ENCODE measurements at regions of chr1 and their contacts with region 1.

Region 1: DNA sequence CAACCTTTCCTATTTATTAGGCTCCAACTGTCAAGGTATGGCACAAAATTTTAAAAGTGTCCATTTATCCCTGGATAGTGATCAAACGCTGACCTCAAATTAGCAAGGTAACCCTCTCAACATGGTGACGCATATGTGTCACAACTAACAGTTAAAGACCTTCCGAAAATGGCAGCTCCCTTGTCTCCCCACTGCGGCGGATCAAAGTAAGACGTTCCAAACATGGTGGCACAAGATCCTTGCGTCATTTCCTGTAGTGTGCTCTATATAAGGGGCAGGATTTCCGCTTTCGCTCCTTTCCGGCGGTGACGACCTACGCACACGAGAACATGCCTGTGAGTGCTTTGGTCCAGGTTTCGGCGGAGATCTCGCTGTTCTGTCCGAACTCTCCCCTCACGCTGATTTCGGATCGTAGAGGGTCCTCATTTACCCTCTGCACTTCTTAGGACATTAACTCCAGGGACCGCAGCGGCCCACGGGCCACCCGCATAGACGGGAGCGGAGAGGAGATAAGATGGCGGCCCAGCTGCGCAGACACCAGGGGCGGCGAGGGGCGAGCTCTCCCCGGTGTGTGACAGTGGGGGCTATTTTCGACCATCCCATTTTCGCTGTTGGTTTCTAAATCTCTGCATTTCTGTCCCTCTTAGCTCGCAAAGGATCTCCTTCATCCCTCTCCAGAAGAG is at the start of gene RPS27:
- DNase-seq: peak; percentile 92 to 95
- ATAC-seq: peak; percentile 92 to 95
- H3K4me3 ChIP-seq: peak within 1 kb of the TSS; percentile 80 to 98 (median 90)
- H3K27ac ChIP-seq: peak within 1 kb of the TSS; percentile 92 to 97 (median 94)
- H3K4me1 ChIP-seq: peaks cover 24 to 26% of the 10 kb centered on the region in 2 donors
- H3K27me3 ChIP-seq: no peaks in the 10 kb centered on the region
- CTCF ChIP-seq: no peak
- POLR2A ChIP-seq: peak; percentile 99
- total RNA-seq, gene RPS27: 1,269 to 1,948 (median 1,828) TPM

Region 2: DNA sequence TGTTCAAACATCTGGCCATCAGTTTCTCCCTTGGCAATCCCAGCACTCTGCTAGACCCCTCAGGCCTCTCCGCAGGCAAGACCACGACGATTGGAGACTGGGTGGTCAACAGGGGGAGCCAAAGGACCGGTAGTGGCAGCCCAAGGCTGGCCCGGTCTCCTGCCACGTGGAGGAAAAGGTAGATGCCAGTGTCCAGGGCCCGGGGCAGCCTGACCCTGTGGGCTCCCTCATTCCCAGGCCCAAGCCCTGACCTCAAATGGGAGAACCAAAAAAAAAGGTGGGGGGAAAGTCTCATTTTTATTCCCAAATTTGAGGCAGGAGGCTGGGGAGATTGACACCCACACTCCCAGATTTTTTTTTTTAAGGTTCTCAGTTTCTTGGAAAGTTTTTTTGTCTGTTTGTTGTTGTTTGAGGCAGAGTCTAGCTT is 479.6 kb before region 1 on chr1:
- in situ Hi-C with region 1: loop called in 1 of 4 experiments (anchors 25 kb)
- intact Hi-C with region 1: no loop called
- DNase-seq: peak; percentile 59 to 79
- ATAC-seq: peak; percentile 55 to 63
- H3K4me3 ChIP-seq: no peak overlapping the region
- H3K27ac ChIP-seq: no peak overlapping the region
- H3K4me1 ChIP-seq: peaks cover 17 to 18% of the 10 kb centered on the region in 2 donors
- H3K27me3 ChIP-seq: no peaks in the 10 kb centered on the region
- CTCF ChIP-seq: peak; percentile 82 to 95 (median 91)
- POLR2A ChIP-seq: no peak

Region 3: GRCh38 chr1:153572569-153573015 is 418.0 kb before region 1 on chr1:
- in situ Hi-C with region 1: no loop called
- intact Hi-C with region 1: loop called (anchors 5 kb)
- DNase-seq: peak; percentile 80 to 88
- ATAC-seq: peak; percentile 83 to 86
- H3K4me3 ChIP-seq: no peak overlapping the region
- H3K27ac ChIP-seq: peak overlapping the region; percentile 59 to 77 (median 67)
- H3K4me1 ChIP-seq: peaks cover 14 to 27% of the 10 kb centered on the region in 2 donors
- H3K27me3 ChIP-seq: no peaks in the 10 kb centered on the region
- CTCF ChIP-seq: peak; percentile 78 to 90 (median 84)
- POLR2A ChIP-seq: no peak

Region 4: DNA sequence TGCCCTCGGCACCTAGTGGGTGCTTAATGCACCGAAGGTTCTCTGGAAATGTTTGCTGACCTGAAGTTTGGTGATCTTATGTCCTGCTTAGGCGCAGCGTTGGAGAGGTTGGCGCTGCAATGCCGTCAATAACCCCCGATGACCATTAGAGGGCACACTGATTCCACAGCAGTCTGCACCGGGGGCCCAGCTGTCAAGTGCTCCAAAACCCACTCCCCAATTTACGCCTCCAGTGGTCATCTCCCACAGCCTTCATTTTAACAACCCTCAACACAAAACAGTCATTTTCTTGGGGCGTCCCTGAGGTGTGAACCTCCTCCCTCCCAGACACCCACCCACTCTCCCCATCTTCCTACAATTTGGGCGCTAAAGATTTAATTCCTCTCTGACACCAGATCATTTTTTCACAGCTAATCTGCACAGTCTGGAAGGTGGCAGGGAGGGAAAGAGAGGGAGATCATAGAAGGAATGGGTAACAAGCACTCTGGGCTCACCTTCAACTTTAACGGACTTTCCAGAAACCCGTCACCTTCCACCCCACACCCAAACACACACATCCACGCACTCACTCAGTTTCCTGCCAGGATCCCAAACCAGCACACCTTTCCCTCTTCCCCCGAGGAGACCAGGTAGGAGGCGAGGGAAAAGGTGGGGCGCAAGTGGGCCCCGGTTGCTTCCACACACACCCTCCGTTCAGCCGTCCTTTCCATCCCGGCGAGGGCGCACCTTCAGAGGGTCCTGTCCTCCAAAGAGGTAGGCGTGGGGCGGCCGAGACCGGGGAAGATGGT is 312.7 kb before region 1 on chr1:
- in situ Hi-C with region 1: loop called in 3 of 4 experiments (anchors 25 kb)
- intact Hi-C with region 1: no loop called
- DNase-seq: peak in 1 of 2 donors; percentile 22
- ATAC-seq: peak; percentile 58 to 73
- H3K4me3 ChIP-seq: peak overlapping the region; percentile 45 to 70 (median 59)
- H3K27ac ChIP-seq: peak overlapping the region; percentile 16 to 57 (median 52)
- H3K4me1 ChIP-seq: peaks cover 9 to 16% of the 10 kb centered on the region in 2 donors
- H3K27me3 ChIP-seq: peaks cover 20 to 27% (median 22%) of the 10 kb centered on the region in 3 donors
- CTCF ChIP-seq: peak; percentile 82 to 93 (median 84)
- POLR2A ChIP-seq: no peak

Region 5: GRCh38 chr1:153796791-153797659 is 193.6 kb before region 1 on chr1:
- in situ Hi-C with region 1: loop called in 3 of 4 experiments (anchors 5 to 10 kb)
- intact Hi-C with region 1: loop called (anchors 1 kb)
- DNase-seq: peak; percentile 62 to 81
- ATAC-seq: peak; percentile 89 to 91
- H3K4me3 ChIP-seq: no peak overlapping the region
- H3K27ac ChIP-seq: no peak overlapping the region
- H3K4me1 ChIP-seq: no peaks in the 10 kb centered on the region
- H3K27me3 ChIP-seq: no peaks in the 10 kb centered on the region
- CTCF ChIP-seq: peak; percentile 86 to 98 (median 94)
- POLR2A ChIP-seq: no peak

Region 6: GRCh38 chr1:153946622-153947241 is 43.9 kb before region 1 on chr1 and contains the start of gene DENND4B:
- in situ Hi-C with region 1: loop called in 1 of 4 experiments (anchors 5 kb)
- intact Hi-C with region 1: loop called (anchors 1 kb)
- DNase-seq: peak; percentile 71 to 86
- ATAC-seq: peak; percentile 74 to 75
- H3K4me3 ChIP-seq: peak within 1 kb of the TSS; percentile 70 to 90 (median 78)
- H3K27ac ChIP-seq: peak within 1 kb of the TSS; percentile 98 to 99 (median 98)
- H3K4me1 ChIP-seq: peaks cover 15 to 31% of the 10 kb centered on the region in 2 donors
- H3K27me3 ChIP-seq: no peaks in the 10 kb centered on the region
- CTCF ChIP-seq: peak; percentile 91 to 99 (median 97)
- POLR2A ChIP-seq: no peak
- total RNA-seq, gene DENND4B: 38.0 to 45.8 (median 40.1) TPM

Region 7: GRCh38 chr1:154183045-154183915 is 192.7 kb after region 1 on chr1:
- in situ Hi-C with region 1: no loop called
- intact Hi-C with region 1: loop called (anchors 10 kb)
- DNase-seq: peak; percentile 88 to 92
- ATAC-seq: peak; percentile 73 to 83
- H3K4me3 ChIP-seq: peak overlapping the region; percentile 69 to 89 (median 82)
- H3K27ac ChIP-seq: peak overlapping the region; percentile 86 to 93 (median 90)
- H3K4me1 ChIP-seq: peaks cover 60 to 61% of the 10 kb centered on the region in 2 donors
- H3K27me3 ChIP-seq: no peaks in the 10 kb centered on the region
- CTCF ChIP-seq: peak in 1 of 5 experiments; percentile 35
- POLR2A ChIP-seq: peak; percentile 94 to 96

Measured in gastrocnemius medialis (tissue), 4 donors.